ENCODE measurements at regions of chr6 and their contacts with region 1.

Region 1: GRCh38 chr6:119283214-119283613 is 66.3 kb downstream of the MAN1A1 start:
- DNase-seq: no peak
- H3K4me3 Mint-ChIP-seq: no peak overlapping the region
- H3K27ac Mint-ChIP-seq: no peak overlapping the region
- H3K4me1 Mint-ChIP-seq: peaks cover 17% of the 10 kb centered on the region
- H3K27me3 Mint-ChIP-seq: no peaks in the 10 kb centered on the region

Region 2: DNA sequence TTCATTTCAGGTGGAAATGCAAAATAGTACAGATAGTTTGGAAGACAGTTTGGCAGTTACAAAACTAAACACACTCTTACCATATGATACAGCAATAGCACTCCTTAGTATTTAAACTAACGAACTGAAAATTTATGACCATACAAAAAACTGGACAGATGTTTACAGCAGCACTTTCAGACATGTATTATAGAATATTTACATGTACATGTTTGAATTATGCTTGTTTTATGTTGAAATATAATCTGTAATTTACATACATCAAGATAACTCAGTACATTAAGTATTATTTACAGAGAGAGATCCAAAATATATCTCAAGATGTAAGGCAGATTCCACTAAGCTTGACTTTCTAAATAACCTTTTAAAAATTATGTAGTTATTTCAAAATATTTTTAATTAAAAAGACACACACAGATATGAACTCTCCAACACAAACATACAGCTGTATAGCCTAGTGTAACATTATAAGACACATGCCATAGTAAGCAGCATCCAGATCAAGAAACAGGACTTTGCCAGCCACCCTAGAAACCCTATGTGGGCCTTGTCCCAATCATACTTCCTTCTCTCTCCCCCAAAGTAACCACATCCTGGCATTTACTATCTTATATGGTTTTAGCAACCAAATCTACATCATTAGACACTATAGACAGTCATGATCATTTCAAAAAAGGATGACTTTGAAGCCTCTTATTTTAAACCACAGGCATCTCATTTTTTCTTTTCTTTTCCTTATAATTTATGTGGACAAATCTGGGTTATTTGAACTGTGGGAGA is 15.9 kb before region 1 on chr6:
- intact Hi-C with region 1: loop called (anchors 2 kb)
- DNase-seq: no peak
- H3K4me3 Mint-ChIP-seq: peak overlapping the region; percentile 1
- H3K27ac Mint-ChIP-seq: peak overlapping the region; percentile 31
- H3K4me1 Mint-ChIP-seq: peaks cover 22% of the 10 kb centered on the region
- H3K27me3 Mint-ChIP-seq: no peaks in the 10 kb centered on the region

Measured in activated CD4-positive, alpha-beta T cell treated with anti-CD3 and anti-CD28 coated beads, Interleukin-2, amount 10 ng/mL, durations not matched to agents 24 days and 14 days (primary cell).